Cardiac septum (tissue), 1 donor: ENCODE measurements at regions of chr13 and their contacts with region 1.

Region 1: GRCh38 chr13:111046590-111047141 is 68.4 kb upstream of the ARHGEF7 start:
- DNase-seq: no peak

Region 2: DNA sequence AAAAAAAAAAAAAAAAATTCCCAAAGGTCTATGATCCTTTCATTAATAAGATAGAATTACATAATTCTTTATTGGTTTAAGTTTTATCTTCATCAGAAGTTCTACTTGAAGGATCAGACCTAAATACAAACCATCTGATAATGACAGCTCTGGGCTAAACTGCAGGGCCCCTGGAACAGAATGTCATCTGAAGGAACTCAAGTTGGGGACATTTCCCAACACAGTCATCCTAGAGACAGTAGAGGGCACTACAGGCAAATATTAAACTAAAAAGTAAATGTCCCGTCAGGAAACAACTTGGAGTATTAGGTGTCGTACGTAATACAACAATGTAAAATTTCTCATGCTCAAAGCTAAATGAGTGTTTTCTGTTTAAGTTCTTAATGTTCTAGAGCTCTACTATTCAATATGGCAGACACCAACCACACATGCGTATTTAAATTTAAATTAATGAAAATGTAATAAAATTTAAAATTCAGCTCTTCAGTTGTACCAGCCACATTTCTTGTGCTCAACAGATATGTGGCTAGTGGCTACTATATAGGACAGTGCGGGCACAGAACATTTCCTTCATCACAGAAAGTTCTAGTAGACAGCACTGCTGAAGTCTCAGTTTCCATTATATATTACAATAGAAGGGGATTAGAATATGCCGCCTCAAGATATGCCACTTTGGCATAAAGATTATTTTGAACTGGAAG is 453.1 kb before region 1 on chr13:
- intact Hi-C with region 1: loop called (anchors 5 kb)
- DNase-seq: no peak

Region 3: DNA sequence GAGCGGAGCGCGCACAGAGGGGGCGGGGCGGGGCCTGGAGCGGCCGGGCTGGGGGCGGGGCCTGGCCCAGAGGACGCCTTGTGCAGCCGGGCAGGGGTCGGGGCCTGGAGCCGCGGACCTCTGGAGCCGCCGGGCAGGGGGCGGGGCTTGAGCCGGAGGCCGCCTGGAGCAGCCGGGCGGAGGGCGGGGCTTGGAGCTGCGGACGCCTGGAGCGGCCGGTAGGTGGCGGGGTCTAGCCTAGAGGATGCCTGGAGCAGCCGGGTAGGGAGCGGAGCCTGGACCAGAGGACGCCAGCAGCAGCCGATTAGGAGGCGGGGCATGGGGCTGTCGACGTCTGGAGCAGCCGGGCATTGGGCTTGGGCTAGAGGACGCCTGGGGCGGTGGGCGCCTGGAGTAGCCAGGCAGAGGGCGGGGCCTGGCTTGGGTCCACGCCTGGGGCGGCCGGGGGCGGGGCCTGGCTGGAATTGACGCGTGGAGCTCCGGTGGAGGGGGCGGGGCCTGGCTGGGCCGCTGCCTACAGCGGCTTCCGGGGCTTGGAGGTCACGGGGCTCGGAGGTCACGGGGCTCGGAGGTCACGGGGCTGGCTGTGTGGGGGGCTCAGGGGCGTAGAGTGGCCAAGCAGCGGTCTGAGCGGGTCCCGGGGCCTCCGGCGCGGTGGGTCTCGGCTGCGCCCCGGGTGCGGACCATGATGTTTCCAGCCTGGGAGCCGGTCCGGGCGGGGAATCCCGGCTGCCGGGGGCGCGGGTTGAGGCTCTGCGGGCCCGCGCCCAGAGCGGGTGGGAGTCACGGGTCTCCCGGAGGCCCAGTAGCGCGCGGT is 131.4 kb before region 1 on chr13 and contains the start of gene ANKRD10:
- intact Hi-C with region 1: loop called (anchors 1 kb)
- DNase-seq: peak; percentile 99
- total RNA-seq, gene ANKRD10: 84.4 TPM

Region 4: DNA sequence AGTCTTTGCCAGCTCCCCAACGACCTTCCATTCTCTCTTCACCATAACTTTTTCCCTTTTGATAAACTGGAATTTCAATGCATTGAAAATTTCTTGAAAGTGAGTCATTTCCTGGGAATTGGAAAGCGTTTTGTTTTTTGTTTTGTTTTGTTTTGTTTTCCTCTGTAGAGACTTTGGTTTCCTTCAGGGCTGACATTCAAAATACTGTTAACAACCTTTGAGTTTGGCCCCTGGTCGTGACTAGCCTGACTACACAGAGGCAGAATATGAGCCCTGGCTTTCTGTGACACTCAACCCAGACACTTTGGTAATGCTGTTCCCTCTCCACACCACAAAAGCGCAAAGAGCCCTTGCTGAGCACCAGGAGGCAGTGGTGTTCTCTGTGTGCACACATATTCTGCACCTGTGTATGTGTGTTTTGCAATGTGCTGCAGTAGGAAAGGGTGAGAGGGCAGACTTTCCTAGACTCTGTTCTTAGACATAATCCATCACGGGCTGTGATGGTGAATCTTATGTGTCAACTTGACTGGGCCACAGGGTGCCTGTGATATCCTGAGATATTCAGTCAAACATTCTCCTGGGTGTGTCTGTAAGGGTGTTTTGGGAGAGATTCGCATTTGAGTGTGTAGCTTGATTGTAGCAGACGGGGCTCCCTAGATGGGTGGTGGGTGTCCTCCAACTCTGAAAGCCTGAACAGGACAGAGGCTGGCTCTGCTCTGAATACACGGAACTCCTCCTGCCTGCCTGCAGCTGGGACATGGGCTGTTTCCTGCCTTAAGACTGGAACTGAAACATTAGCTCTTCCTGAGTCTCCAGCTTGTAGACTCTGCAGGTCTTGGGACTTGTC is 102.3 kb before region 1 on chr13:
- intact Hi-C with region 1: loop called (anchors 5 kb)
- DNase-seq: peak; percentile 70

Region 5: DNA sequence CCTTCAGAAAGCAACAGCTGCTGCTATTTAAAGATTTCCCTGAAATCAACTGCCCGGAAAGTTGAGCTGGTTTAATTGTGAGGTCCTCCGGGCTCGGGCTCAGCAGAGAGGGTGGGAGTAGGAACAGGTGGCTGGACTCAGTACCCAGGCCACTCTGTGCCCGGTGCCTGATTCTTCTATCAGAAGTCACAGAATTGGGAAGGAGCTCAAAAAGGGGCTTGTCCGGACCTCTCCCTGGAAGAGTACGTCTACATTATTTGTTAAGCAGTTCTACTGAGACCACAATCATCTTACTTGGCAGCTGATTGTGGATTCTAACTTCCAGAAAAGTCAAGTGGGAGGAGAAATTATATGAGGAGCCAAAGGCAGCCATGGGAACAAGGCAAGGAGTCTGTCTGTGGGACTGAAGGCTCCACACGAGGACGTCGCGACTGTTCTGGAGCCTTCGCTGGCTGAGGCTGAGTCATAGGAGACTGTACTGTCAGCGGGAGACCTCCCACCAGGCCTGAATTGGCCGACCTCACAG is 40.1 kb before region 1 on chr13:
- intact Hi-C with region 1: loop called (anchors 1 kb)
- DNase-seq: peak; percentile 90